B cell (primary cell): ENCODE measurements at regions of chr3 and their contacts with region 1.

Region 1: GRCh38 chr3:8254489-8254888 is 247.1 kb upstream of the LMCD1 start:
- DNase-seq: no peak
- ATAC-seq: no peak
- H3K4me3 ChIP-seq: no peak overlapping the region
- H3K4me3 Mint-ChIP-seq: no peak overlapping the region
- H3K27ac ChIP-seq: no peak overlapping the region
- H3K27ac Mint-ChIP-seq: no peak overlapping the region
- H3K4me1 ChIP-seq: no peaks in the 10 kb centered on the region
- H3K4me1 Mint-ChIP-seq: no peaks in the 10 kb centered on the region
- H3K27me3 ChIP-seq: no peaks in the 10 kb centered on the region
- H3K27me3 Mint-ChIP-seq: no peaks in the 10 kb centered on the region
- CTCF ChIP-seq: no peak

Region 2: GRCh38 chr3:8111069-8111798 is 143.3 kb before region 1 on chr3:
- CTCF ChIA-PET with region 1: no interaction called
- POLR2A ChIA-PET with region 1: no interaction called
- intact Hi-C with region 1: no loop called
- DNase-seq: peak; percentile 30
- ATAC-seq: peak; percentile 43
- H3K4me3 ChIP-seq: peak overlapping the region in 1 of 5 experiments; percentile 23
- H3K4me3 Mint-ChIP-seq: peak overlapping the region; percentile 61
- H3K27ac ChIP-seq: no peak overlapping the region
- H3K27ac Mint-ChIP-seq: no peak overlapping the region
- H3K4me1 ChIP-seq: peaks cover 0 to 3% of the 10 kb centered on the region in 2 donors
- H3K4me1 Mint-ChIP-seq: peaks cover 3% of the 10 kb centered on the region
- H3K27me3 ChIP-seq: no peaks in the 10 kb centered on the region
- H3K27me3 Mint-ChIP-seq: peaks cover 3% of the 10 kb centered on the region
- CTCF ChIP-seq: peak; percentile 32

Region 3: GRCh38 chr3:8239718-8240695 is 14.5 kb before region 1 on chr3:
- CTCF ChIA-PET with region 1: interaction called, 10 read pairs
- POLR2A ChIA-PET with region 1: no interaction called
- intact Hi-C with region 1: no loop called
- DNase-seq: peak; percentile 29
- ATAC-seq: no peak
- H3K4me3 ChIP-seq: no peak overlapping the region
- H3K4me3 Mint-ChIP-seq: no peak overlapping the region
- H3K27ac ChIP-seq: no peak overlapping the region
- H3K27ac Mint-ChIP-seq: no peak overlapping the region
- H3K4me1 ChIP-seq: no peaks in the 10 kb centered on the region
- H3K4me1 Mint-ChIP-seq: no peaks in the 10 kb centered on the region
- H3K27me3 ChIP-seq: no peaks in the 10 kb centered on the region
- H3K27me3 Mint-ChIP-seq: no peaks in the 10 kb centered on the region
- CTCF ChIP-seq: peak; percentile 91